Activated CD4-positive, alpha-beta T cell treated with anti-CD3 and anti-CD28 coated beads for 36 hours (primary cell): ENCODE measurements at regions of chr9 and their contacts with region 1.

Region 1: DNA sequence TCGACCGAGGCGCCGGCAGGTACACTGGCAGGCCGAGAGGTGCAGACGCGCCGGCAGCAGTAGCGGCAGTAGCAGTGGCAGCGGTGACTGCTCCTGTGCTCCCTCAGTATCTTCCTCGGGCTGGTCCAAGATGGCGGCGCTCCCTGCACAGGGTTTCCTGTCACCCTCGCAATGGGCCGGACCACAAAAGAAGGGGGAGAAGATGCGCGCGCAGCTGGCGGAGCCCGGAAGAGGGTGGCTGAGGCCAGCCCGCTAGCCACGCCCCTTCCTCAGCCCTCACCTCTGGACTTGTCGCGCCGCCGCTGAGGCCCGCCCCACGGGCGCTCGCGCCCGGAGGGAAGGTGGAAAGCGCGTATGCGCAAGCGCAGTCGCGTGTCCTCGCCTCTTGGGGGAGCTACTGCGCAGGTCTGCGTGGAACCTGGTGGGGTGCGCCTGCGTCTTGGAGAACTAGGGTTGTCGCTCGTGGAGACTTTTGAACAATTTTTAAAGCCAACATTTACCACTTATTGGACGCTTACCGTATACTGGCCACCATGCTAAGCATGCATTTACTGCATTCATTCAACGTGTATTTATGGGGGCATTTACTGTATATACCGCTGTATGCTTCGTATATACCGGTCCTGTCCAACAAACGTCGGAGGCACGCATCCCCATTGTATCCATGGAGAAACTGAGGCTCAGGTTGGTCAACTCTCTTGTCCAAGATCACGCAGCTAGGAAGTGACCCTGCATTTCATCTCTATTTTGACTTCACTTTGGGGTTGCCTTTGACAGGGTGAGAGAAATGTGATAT is at the start of gene RAB14:
- DNase-seq: peak; percentile 100
- ATAC-seq: peak; percentile 92
- H3K4me3 Mint-ChIP-seq: peak within 1 kb of the TSS; percentile 93
- H3K27ac Mint-ChIP-seq: peak within 1 kb of the TSS; percentile 93
- H3K4me1 Mint-ChIP-seq: peaks cover 38% of the 10 kb centered on the region
- H3K27me3 Mint-ChIP-seq: no peaks in the 10 kb centered on the region
- total RNA-seq, gene RAB14: 52.3 to 54.7 TPM

Region 2: DNA sequence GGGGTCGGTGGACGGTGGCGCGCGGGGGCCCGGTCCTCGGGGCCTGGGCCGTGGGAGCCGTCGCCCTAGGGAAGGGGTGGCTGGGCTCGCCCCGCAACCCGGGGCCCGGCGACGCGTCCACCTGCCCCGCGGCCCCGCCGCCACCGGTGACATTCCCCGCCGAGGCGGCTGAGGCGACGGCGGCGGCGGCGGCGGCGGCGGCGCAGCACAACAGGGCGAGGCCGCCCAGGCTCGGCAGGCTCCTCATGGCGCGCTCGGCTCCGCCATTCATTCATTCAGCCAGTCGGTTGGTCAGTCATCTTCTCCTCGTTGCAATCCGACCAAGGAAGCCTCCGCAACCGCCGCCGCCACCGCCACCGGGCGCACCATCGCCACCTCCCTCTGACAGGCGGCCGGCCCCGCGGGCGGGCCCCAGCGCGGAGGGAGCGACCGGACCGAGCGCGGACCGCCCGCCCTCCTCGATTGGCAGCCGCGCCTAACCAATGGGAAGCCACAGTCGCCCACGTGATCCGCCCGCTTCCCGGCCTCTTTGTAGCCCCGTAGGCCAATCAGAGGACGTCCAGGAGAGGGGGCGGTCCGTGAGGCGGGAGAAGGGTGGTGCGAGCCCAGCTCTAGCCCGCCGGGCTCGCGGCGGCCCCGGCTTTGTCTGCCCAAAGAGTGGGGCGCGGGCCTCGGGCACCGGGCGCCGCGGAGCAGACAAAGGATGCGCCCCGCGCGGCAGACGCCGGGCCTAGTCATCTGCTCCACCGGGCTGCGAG is 487.7 kb before region 1 on chr9 and contains the start of gene MEGF9:
- CTCF ChIA-PET with region 1: no interaction called
- POLR2A ChIA-PET with region 1: no interaction called
- intact Hi-C with region 1: loop called in 1 of 2 experiments (anchors 1 kb)
- DNase-seq: peak; percentile 99
- ATAC-seq: peak; percentile 98
- H3K4me3 Mint-ChIP-seq: peak within 1 kb of the TSS; percentile 84
- H3K27ac Mint-ChIP-seq: peak within 1 kb of the TSS; percentile 74
- H3K4me1 Mint-ChIP-seq: peaks cover 34% of the 10 kb centered on the region
- H3K27me3 Mint-ChIP-seq: no peaks in the 10 kb centered on the region
- total RNA-seq, gene MEGF9: 3.3 to 3.6 TPM

Region 3: DNA sequence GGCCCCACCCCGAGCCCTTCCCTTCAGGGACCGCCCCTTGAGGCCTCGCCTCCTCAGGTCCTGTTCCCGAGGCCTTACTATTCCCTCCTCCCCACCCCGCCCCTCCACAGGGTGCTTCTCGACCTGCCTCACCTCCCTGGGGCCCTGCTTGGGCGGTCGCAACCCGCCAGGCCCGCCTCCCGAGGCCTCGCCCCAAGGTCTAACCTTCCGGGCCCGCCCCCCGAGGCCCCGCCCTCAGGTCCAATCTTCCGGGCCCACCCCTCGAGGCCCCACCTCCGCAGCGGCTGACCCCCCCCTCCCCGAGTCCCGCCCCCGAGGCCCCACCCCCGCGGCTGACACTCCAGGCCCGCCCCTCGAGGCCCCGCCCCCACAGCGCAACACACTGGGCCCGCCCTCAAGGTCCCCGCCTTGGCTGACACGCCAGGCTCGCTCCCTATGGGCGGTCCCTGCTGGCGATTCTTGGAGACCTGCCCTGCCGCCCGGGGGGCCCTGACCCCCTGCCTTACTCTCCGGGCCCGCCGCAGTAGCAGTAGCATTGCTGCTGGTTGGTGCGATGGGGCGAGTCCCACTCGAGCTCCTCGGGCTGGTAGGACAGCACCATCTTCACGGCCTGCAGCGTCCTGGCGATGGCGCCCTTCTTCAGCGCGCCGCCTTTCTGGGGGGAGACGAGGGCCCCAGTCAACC is 333.1 kb before region 1 on chr9:
- CTCF ChIA-PET with region 1: no interaction called
- POLR2A ChIA-PET with region 1: no interaction called
- intact Hi-C with region 1: loop called in 1 of 2 experiments (anchors 2 kb)
- DNase-seq: peak; percentile 99
- ATAC-seq: peak; percentile 94
- H3K4me3 Mint-ChIP-seq: peak overlapping the region; percentile 64
- H3K27ac Mint-ChIP-seq: peak overlapping the region; percentile 70
- H3K4me1 Mint-ChIP-seq: peaks cover 40% of the 10 kb centered on the region
- H3K27me3 Mint-ChIP-seq: no peaks in the 10 kb centered on the region

Region 4: GRCh38 chr9:121185178-121185745 is 16.7 kb before region 1 on chr9:
- CTCF ChIA-PET with region 1: interaction called, 19 read pairs
- POLR2A ChIA-PET with region 1: interaction called, 5 read pairs
- intact Hi-C with region 1: no loop called
- DNase-seq: no peak
- ATAC-seq: peak; percentile 69
- H3K4me3 Mint-ChIP-seq: no peak overlapping the region
- H3K27ac Mint-ChIP-seq: peak overlapping the region; percentile 73
- H3K4me1 Mint-ChIP-seq: peaks cover 61% of the 10 kb centered on the region
- H3K27me3 Mint-ChIP-seq: no peaks in the 10 kb centered on the region

Region 5: DNA sequence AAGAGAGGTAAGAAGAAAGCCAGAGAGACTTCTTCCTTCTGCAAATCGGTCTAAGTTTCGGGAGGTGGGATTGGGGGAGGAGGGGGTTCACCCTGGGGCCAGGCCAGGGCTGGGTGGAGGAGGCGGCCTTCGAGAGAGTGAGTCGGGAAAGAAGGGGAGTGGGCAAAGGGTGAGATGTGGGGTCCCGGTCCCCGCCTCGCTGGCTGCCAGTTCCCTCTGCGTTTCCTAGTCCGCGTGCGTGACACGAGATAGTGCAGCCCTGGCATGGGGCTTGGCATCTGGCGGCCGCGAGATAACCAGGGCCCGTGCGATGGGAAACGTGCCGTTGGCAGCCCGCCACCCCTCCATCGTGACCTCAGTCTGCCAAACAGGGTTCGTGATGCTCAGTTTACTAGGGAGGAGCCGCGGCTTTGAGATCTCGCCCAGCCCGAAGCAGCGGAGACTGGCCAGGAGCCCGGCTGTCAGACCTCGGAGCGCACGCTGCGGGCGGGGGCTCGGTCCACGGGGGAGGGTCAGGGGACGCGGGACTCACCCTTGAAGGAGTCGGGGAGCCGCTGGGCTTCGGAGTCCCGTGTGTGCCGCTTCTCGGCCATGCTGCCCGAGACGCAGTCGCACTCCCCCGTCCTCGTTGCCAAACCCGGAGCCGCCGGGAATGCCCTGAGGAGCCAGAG is 167.8 kb after region 1 on chr9 and contains the start of gene STOM:
- CTCF ChIA-PET with region 1: interaction called, 4 read pairs
- POLR2A ChIA-PET with region 1: no interaction called
- intact Hi-C with region 1: loop called in 1 of 2 experiments (anchors 1 kb)
- DNase-seq: peak; percentile 81
- ATAC-seq: peak; percentile 57
- H3K4me3 Mint-ChIP-seq: peak within 1 kb of the TSS; percentile 76
- H3K27ac Mint-ChIP-seq: peak within 1 kb of the TSS; percentile 95
- H3K4me1 Mint-ChIP-seq: peaks cover 27% of the 10 kb centered on the region
- H3K27me3 Mint-ChIP-seq: no peaks in the 10 kb centered on the region
- total RNA-seq, gene STOM: 34.7 to 44.5 TPM

Region 6: DNA sequence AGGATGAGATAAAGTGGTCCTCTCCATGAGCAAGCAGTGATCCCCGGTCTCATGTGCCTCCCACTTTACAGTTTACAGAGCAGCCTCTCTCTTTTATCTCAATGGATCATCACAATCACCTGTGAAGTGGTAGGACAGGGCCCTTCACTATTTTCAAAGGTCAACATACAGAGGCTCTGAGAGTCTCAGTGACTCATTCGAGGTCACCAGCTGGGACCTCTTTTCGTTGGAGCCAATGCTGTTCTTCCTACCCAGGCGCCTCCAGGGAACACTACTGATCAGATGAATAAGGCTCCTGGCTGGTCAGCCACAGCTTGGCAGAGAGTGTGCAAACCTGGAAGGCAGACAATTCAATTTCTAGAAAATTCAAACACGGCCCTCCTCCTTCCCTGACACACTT is 281.1 kb after region 1 on chr9:
- CTCF ChIA-PET with region 1: no interaction called
- POLR2A ChIA-PET with region 1: no interaction called
- intact Hi-C with region 1: no loop called
- DNase-seq: no peak
- ATAC-seq: no peak
- H3K4me3 Mint-ChIP-seq: no peak overlapping the region
- H3K27ac Mint-ChIP-seq: no peak overlapping the region
- H3K4me1 Mint-ChIP-seq: no peaks in the 10 kb centered on the region
- H3K27me3 Mint-ChIP-seq: no peaks in the 10 kb centered on the region